Heart right ventricle (tissue), 16 donors: ENCODE measurements at regions of chr11 and their contacts with region 1.

Region 1: GRCh38 chr11:69122642-69123431 is 32.9 kb upstream of the SMIM38 start:
- DNase-seq: peak; percentile 66 to 71
- ATAC-seq: peak; percentile 72 to 93 (median 90)
- H3K4me3 ChIP-seq: peak overlapping the region in 3 of 10 donors; percentile 10 to 24 (median 18)
- H3K27ac ChIP-seq: peak overlapping the region in 9 of 10 donors; percentile 11 to 85 (median 71)
- H3K4me1 ChIP-seq: peaks cover 12 to 35% (median 22%) of the 10 kb centered on the region in 9 donors
- H3K27me3 ChIP-seq: no peaks in the 10 kb centered on the region
- CTCF ChIP-seq: no peak

Region 2: GRCh38 chr11:68956142-68956541 is 166.7 kb before region 1 on chr11:
- intact Hi-C with region 1: no loop called
- DNase-seq: no peak
- ATAC-seq: no peak
- H3K4me3 ChIP-seq: no peak overlapping the region
- H3K27ac ChIP-seq: no peak overlapping the region
- H3K4me1 ChIP-seq: peaks cover 0 to 11% (median 10%) of the 10 kb centered on the region in 9 donors
- H3K27me3 ChIP-seq: no peaks in the 10 kb centered on the region
- CTCF ChIP-seq: peak in 2 of 9 donors; percentile 13 to 27

Region 3: DNA sequence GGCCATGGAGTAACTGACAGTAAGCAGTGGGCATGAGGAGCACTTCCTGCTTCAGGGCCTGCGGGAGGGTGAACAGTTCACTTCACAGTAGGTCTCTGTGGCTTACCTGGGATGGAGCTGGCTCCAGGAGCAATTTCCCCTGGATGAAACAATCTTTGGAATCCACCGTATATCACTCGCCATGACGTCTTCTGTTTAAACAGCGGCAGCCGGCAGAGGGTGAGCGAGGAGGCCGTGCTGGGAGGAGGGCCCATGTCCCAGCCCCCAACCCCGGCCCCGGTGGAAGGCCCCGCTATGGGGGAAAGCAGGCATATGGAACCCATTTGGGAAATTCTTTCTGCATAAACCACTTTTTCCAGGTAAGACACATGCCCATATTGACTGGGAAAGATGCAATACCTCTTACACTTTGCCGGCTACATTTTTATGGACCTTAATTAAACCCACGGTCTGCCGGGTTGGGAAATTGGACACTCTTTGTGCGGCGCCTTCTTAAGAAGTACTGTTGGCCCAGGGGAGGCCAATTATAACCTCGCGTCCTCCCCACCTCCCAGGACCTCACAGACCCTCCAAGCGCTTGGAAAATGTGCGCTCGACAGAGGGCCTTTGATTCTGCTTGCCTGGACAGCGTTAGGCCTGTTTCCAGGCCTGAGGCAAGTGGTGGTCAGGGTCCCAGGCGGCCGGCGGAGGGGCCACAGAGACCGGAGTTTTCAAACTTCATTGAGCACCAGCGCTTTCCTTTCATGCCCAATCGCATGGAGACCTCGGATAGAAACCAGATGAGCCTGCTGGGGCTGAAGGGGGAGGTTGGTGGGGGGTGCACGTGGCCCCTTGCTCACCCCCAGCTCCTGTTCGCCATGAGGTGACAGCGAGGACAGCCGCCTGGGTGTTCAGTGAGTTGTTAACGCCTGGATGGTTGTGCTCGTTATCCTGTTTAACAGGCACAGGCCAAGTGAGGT is 73.3 kb after region 1 on chr11:
- intact Hi-C with region 1: loop called in 1 of 10 experiments (anchors 2 kb)
- DNase-seq: no peak
- ATAC-seq: no peak
- H3K4me3 ChIP-seq: no peak overlapping the region
- H3K27ac ChIP-seq: no peak overlapping the region
- H3K4me1 ChIP-seq: peaks cover 3 to 34% (median 14%) of the 10 kb centered on the region in 9 donors
- H3K27me3 ChIP-seq: peaks cover 0 to 7% (median 0%) of the 10 kb centered on the region in 7 donors
- CTCF ChIP-seq: no peak

Region 4: DNA sequence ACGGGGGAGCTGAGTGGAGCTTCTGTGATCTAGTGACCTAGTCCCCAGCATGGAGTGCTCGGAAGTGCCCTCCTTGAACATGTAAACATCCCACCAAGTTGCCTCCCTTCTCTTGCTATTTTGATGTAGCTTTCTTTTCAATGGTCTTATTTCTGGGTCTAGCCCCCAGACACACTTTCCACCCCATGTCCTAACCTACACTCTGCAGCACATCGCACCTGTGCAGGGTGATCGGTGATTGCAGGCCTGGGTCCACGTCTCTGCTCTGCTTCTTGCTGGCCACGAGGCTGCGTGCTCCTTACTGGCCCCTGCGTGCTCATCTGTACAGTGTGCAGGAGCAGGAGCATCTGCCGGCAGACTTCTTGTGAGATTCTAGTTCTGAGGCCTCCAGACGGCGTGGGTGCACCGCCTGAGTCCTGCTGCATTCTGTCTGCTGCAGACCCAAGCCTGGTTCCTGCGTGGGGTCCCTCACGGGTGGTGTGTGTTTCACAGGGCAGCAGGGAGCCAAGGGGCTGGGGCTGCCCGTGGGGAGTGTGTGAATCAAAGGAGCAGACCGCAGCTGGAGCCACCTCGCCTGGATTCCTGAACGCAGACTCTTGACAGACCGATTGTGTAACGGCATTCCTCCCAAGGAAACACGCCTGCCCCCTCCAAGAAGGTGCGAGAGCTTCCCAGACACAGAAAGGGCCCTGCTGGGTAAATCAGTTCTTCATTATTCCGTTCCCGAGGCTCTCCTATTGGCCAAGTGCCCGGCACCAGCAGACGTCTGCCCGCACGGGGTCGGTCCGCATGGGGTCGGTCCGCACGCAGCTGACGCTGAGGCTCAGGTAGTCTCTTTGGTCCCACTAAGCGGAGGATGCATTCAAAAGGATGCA is 126.7 kb after region 1 on chr11:
- intact Hi-C with region 1: loop called in 1 of 10 experiments (anchors 10 kb)
- DNase-seq: no peak
- ATAC-seq: no peak
- H3K4me3 ChIP-seq: no peak overlapping the region
- H3K27ac ChIP-seq: no peak overlapping the region
- H3K4me1 ChIP-seq: peaks cover 0 to 7% (median 0%) of the 10 kb centered on the region in 9 donors
- H3K27me3 ChIP-seq: peaks cover 0 to 2% (median 0%) of the 10 kb centered on the region in 7 donors
- CTCF ChIP-seq: no peak